ENCODE measurements at regions of chr7 and their contacts with region 1.

Region 1: DNA sequence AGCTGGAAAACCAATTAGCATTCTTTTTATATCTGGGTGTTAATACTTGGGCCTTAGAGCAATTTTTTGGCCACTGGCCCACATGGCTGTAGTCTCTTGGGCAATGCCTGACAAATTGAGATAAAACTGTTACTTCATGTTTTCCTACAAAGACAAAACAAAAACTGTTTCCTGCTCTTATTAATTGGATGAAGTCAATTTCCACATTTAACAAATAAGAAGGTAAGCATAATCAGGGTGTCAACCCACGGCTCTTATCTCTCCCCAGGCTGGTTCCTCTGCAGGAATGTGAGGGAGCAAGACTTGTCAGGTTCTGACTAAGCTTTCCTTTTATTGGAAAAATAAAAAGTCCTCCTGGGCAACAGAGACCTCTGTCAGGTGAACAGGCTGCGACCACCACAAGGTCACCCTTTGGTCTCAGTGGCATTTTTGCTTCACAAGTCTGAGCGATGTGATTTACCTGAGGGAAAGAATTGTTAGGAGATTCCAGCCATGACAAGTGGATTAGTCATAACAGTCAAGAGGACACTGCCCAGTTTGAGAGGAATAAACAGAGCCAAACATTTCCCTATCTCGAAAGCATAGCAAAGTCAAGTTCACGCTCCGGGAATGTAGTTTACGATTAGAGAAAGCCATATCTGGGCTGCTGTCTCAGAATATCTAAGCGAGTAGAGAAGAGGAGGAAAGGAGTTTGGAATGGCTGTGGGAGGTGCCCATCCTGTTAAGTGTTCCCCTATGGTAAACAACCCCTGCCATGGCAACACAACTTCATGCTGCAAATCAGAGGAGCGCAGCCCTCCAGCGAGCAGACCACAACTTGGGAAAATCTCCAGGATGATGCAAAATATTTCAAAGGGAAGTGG is 144.4 kb downstream of the TES start:
- DNase-seq: peak; percentile 96
- ATAC-seq: peak; percentile 85
- H3K4me3 ChIP-seq: peak overlapping the region; percentile 51; the same call in 1 of the 2 replicates
- H3K27ac ChIP-seq: peak overlapping the region; percentile 91
- H3K4me1 ChIP-seq: peaks cover 51% of the 10 kb centered on the region
- H3K27me3 ChIP-seq: no peaks in the 10 kb centered on the region
- CTCF ChIP-seq: no peak

Region 2: GRCh38 chr7:116030651-116031276 is 324.0 kb before region 1 on chr7 and contains the start of gene TFEC:
- CTCF ChIA-PET with region 1: no interaction called
- POLR2A ChIA-PET with region 1: no interaction called
- intact Hi-C with region 1: no loop called
- DNase-seq: peak; percentile 24
- ATAC-seq: no peak
- H3K4me3 ChIP-seq: no peak within 1 kb of the TSS
- H3K27ac ChIP-seq: no peak within 1 kb of the TSS
- H3K4me1 ChIP-seq: no peaks in the 10 kb centered on the region
- H3K27me3 ChIP-seq: peaks cover 18% of the 10 kb centered on the region
- CTCF ChIP-seq: no peak
- total RNA-seq, gene TFEC: 0.12 and 0.15 TPM in 2 replicates

Region 3: DNA sequence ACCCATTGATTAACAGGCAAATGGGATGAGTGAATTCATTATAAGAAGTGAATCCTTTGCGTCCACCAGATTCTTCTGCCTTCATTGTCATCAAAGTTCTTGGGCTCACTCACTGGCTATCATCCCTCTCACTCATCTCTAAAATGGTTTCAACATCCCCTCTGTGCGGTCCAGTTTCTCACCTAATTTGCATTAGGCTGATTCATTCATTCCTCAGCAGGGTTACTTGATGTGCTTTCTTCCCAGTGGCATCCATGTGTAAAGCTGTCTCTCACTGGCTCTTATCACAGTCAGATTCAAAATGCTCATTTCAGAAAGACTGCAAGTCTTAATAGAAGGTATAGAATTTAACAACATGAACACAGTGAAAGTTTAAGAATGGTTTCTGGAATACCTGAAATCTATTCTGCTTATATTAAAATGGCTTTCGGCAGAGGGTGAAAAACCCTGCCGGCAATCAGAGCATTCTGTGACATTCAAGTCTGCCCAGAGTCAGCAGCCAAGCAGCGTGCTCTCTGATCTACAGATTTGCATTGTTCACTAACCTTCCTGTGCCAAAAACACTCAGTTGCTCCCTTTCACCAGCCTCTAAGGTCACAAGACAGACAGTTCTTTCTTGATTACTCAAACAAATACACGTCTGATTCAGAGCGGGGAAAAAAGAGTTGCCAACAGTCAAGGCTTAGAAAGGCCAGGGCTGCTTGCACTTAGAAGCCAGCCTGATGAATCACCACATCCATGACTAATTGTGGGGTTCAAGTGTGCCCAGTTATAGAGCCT is 37.8 kb before region 1 on chr7:
- CTCF ChIA-PET with region 1: no interaction called
- POLR2A ChIA-PET with region 1: no interaction called
- intact Hi-C with region 1: loop called (anchors 1 kb)
- DNase-seq: peak; percentile 98
- ATAC-seq: peak; percentile 93
- H3K4me3 ChIP-seq: peak overlapping the region; percentile 29
- H3K27ac ChIP-seq: peak overlapping the region; percentile 87
- H3K4me1 ChIP-seq: peaks cover 25% of the 10 kb centered on the region
- H3K27me3 ChIP-seq: no peaks in the 10 kb centered on the region
- CTCF ChIP-seq: no peak

Region 4: GRCh38 chr7:116395125-116395791 is 40.5 kb after region 1 on chr7:
- CTCF ChIA-PET with region 1: no interaction called
- POLR2A ChIA-PET with region 1: no interaction called
- intact Hi-C with region 1: loop called (anchors 1 kb)
- DNase-seq: peak; percentile 92
- ATAC-seq: peak; percentile 100
- H3K4me3 ChIP-seq: peak overlapping the region; percentile 27
- H3K27ac ChIP-seq: peak overlapping the region; percentile 83
- H3K4me1 ChIP-seq: peaks cover 30% of the 10 kb centered on the region
- H3K27me3 ChIP-seq: no peaks in the 10 kb centered on the region
- CTCF ChIP-seq: no peak

Region 5: DNA sequence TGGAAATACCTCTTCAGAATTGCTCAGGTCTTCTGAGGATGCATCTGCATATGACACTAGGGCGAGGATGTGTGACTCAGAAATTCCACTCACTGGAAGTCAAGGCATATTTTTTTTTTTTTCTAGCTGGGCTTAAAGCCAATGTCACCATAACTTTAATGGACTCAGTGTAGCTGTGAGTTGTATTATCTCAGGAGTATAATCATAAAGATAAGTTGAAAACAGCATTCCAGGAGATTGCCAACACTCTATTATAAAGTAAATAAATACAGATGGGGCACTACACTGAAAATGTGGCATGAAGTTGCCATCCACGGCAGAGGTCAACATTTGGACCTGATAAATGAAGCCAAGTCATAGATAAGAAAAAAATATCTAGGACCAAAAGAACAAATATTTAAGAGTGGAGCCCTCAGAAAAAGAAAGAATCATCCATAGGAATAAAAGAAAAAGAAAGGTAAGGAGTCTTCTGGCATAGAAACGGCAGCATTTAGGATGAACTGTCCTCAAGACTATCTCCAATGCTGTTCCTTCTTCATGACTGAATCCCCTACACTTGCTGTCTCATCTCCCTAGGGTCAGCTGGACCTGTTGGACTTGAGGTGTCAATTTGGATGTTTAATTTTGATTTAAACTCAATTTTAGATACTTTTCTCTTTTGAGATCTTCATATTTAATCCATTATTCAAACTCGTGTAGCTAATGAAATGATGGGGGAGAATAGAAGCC is 71.8 kb after region 1 on chr7:
- CTCF ChIA-PET with region 1: no interaction called
- POLR2A ChIA-PET with region 1: no interaction called
- intact Hi-C with region 1: loop called (anchors 5 kb)
- DNase-seq: peak; percentile 96
- ATAC-seq: peak; percentile 70
- H3K4me3 ChIP-seq: no peak overlapping the region
- H3K27ac ChIP-seq: peak overlapping the region; percentile 52
- H3K4me1 ChIP-seq: peaks cover 30% of the 10 kb centered on the region
- H3K27me3 ChIP-seq: no peaks in the 10 kb centered on the region
- CTCF ChIP-seq: no peak

Region 6: GRCh38 chr7:116434820-116435341 is 80.1 kb after region 1 on chr7:
- CTCF ChIA-PET with region 1: no interaction called
- POLR2A ChIA-PET with region 1: no interaction called
- intact Hi-C with region 1: loop called (anchors 2 kb)
- DNase-seq: peak; percentile 85
- ATAC-seq: peak; percentile 97
- H3K4me3 ChIP-seq: peak overlapping the region; percentile 34; the same call in 1 of the 2 replicates
- H3K27ac ChIP-seq: peak overlapping the region; percentile 85
- H3K4me1 ChIP-seq: peaks cover 34% of the 10 kb centered on the region
- H3K27me3 ChIP-seq: no peaks in the 10 kb centered on the region
- CTCF ChIP-seq: no peak

Measured in PC-3 (cell line).